Mammary epithelial cell (primary cell): ENCODE measurements at regions of chr12 and their contacts with region 1.

Region 1: GRCh38 chr12:102740141-102740955 is 176.7 kb downstream of the PAH start:
- DNase-seq: peak; percentile 1
- H3K4me3 ChIP-seq: no peak overlapping the region
- H3K27ac ChIP-seq: no peak overlapping the region
- H3K4me1 ChIP-seq: no peaks in the 10 kb centered on the region
- H3K27me3 ChIP-seq: no peaks in the 10 kb centered on the region
- CTCF ChIP-seq: peak in 1 of 2 donors; percentile 22

Region 2: GRCh38 chr12:102562836-102563425 is 177.4 kb before region 1 on chr12:
- CTCF ChIA-PET with region 1: no interaction called
- dilution Hi-C with region 1: no loop called
- in situ Hi-C with region 1: no loop called
- intact Hi-C with region 1: no loop called
- DNase-seq: no peak
- H3K4me3 ChIP-seq: no peak overlapping the region
- H3K27ac ChIP-seq: no peak overlapping the region
- H3K4me1 ChIP-seq: no peaks in the 10 kb centered on the region
- H3K27me3 ChIP-seq: no peaks in the 10 kb centered on the region
- CTCF ChIP-seq: no peak

Region 3: GRCh38 chr12:102848832-102849231 is 108.5 kb after region 1 on chr12:
- CTCF ChIA-PET with region 1: no interaction called
- dilution Hi-C with region 1: loop called (anchors 5 kb)
- in situ Hi-C with region 1: no loop called
- intact Hi-C with region 1: no loop called
- DNase-seq: no peak
- H3K4me3 ChIP-seq: no peak overlapping the region
- H3K27ac ChIP-seq: no peak overlapping the region
- H3K4me1 ChIP-seq: no peaks in the 10 kb centered on the region
- H3K27me3 ChIP-seq: no peaks in the 10 kb centered on the region
- CTCF ChIP-seq: no peak